ENCODE measurements at regions of chrX and their contacts with region 1.

Region 1: DNA sequence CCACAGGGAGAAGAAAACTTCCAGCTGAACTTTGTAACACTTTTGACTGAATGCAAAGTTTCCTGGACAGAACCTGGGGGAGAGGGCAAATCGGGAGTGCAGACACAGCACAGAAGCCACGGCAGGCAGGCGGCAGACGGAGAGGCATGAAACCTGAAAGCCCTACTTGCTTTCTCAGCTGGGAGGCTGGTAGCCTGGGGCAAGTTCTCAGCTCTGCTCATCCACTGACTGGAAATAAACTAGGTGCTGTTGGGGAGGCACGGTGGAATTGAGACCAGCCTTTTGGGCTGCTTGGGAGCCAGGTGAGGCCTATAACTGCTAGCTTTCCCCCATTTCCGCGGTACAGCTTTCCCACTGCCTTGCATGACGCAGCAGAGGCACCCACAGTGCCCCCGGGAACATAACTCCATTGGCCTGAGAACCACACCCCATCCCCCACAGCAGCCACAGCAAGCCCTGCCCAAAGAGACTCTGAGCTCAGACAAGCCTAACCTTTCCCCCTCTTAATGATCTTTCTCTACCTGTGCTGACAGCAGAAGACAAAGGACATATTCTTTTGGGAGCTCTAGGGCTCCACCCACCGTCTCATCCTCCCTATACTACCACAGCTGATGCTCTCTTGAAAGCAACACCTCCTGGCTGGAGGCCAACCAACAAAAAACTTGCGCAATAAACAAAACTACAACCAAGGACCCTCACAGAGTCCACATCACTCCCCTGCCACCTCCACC is 114.9 kb downstream of the FANCB start:
- DNase-seq: no peak
- H3K4me3 ChIP-seq: no peak overlapping the region
- H3K27ac ChIP-seq: no peak overlapping the region
- H3K4me1 ChIP-seq: no peaks in the 10 kb centered on the region
- H3K27me3 ChIP-seq: no peaks in the 10 kb centered on the region
- CTCF ChIP-seq: no peak

Region 2: GRCh38 chrX:13569479-13570260 is 1188.3 kb before region 1 on chrX and contains the start of gene EGFL6:
- intact Hi-C with region 1: loop called (anchors 10 kb)
- DNase-seq: no peak
- H3K4me3 ChIP-seq: peak within 1 kb of the TSS; percentile 41 to 44
- H3K27ac ChIP-seq: no peak within 1 kb of the TSS
- H3K4me1 ChIP-seq: no peaks in the 10 kb centered on the region
- H3K27me3 ChIP-seq: no peaks in the 10 kb centered on the region
- CTCF ChIP-seq: no peak
- total RNA-seq, gene EGFL6: not detected